ENCODE measurements at regions of chr1 and their contacts with region 1.

Region 1: GRCh38 chr1:84753516-84754385 is 63.5 kb upstream of the SSX2IP start:
- DNase-seq: peak; percentile 72
- H3K4me3 ChIP-seq: no peak overlapping the region
- H3K27ac ChIP-seq: no peak overlapping the region
- H3K4me1 ChIP-seq: no peaks in the 10 kb centered on the region
- CTCF ChIP-seq: peak; percentile 99

Region 2: DNA sequence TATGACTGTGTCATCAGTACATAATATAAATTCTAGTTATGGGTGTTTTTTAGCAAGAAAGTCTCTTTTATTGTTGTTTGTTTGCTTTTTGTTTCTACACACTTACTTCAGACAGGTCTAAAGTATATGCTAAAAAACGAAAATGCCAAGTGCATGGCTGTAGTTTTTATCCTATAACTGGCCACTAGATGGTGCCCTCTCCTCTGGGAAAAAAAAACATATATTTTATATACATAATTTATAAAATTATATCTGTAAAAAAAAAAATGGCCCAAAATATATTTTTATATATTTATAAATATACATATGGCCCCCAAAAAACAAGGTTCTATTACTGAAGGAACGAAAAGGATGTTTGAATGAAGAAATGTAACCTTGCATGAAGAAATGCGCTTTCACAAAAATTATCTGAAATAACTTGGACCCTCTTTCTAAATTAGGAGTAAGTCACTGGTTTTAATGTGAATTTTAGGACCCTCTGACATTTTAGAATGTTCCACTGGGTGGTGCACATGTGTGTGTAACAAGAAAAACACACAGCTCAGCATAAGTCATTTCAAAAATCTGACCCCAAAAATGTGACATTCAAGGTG is 848.3 kb before region 1 on chr1:
- CTCF ChIA-PET with region 1: no interaction called
- POLR2A ChIA-PET with region 1: no interaction called
- intact Hi-C with region 1: loop called (anchors 10 kb)
- DNase-seq: peak; percentile 38
- H3K4me3 ChIP-seq: no peak overlapping the region
- H3K27ac ChIP-seq: no peak overlapping the region
- H3K4me1 ChIP-seq: no peaks in the 10 kb centered on the region
- CTCF ChIP-seq: peak; percentile 82

Region 3: GRCh38 chr1:83931658-83932253 is 822.0 kb before region 1 on chr1:
- CTCF ChIA-PET with region 1: no interaction called
- POLR2A ChIA-PET with region 1: no interaction called
- intact Hi-C with region 1: loop called (anchors 5 kb)
- DNase-seq: peak; percentile 67
- H3K4me3 ChIP-seq: no peak overlapping the region
- H3K27ac ChIP-seq: no peak overlapping the region
- H3K4me1 ChIP-seq: no peaks in the 10 kb centered on the region
- CTCF ChIP-seq: peak; percentile 95

Region 4: DNA sequence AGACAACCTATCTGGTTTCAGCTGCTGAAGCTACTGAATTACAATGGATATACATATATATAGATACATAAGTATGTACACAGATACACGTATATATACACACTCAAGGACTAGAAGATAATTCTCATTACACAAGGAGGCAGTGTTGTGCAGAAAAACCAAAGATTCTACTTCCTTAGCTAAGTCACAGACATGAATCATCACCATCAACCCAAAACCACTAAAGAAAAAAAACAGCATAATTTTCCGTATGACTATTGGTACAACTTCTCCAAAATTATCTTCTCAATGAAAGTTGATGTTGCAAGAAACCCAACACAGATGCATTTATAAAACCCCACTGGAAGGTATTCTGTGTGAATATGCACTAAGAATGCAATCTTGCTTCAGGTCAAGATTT is 311.5 kb before region 1 on chr1:
- CTCF ChIA-PET with region 1: no interaction called
- POLR2A ChIA-PET with region 1: interaction called, 4 read pairs
- intact Hi-C with region 1: loop called (anchors 1 kb)
- DNase-seq: peak; percentile 60
- H3K4me3 ChIP-seq: no peak overlapping the region
- H3K27ac ChIP-seq: no peak overlapping the region
- H3K4me1 ChIP-seq: peaks cover 6% of the 10 kb centered on the region
- CTCF ChIP-seq: peak; percentile 80

Region 5: DNA sequence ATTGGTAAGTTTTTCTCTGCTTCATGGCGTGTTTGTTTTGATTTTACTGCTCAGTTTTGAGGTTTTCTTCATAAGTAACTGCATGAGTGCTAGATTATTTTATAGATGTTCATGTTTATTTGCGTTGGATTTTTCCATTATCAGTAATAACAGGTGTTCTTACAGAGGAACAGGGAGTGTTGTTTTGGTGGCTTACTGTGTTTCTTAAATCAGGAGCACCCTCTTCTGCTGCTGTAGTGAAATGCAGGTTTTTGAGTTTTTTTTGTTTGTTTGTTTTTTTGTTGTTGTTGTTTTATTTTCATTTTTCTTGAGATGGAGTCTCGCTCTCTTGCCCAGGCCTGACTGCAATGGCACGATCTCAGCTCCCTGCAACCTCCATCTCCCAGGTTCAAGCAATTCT is 212.1 kb before region 1 on chr1:
- CTCF ChIA-PET with region 1: no interaction called
- POLR2A ChIA-PET with region 1: no interaction called
- intact Hi-C with region 1: loop called (anchors 10 kb)
- DNase-seq: peak; percentile 8
- H3K4me3 ChIP-seq: no peak overlapping the region
- H3K27ac ChIP-seq: no peak overlapping the region
- H3K4me1 ChIP-seq: no peaks in the 10 kb centered on the region
- CTCF ChIP-seq: peak; percentile 68

Region 6: GRCh38 chr1:84620720-84621313 is 132.9 kb before region 1 on chr1:
- CTCF ChIA-PET with region 1: no interaction called
- POLR2A ChIA-PET with region 1: no interaction called
- intact Hi-C with region 1: loop called (anchors 2 kb)
- DNase-seq: peak; percentile 87
- H3K4me3 ChIP-seq: peak overlapping the region; percentile 73
- H3K27ac ChIP-seq: peak overlapping the region; percentile 38
- H3K4me1 ChIP-seq: peaks cover 9% of the 10 kb centered on the region
- CTCF ChIP-seq: peak; percentile 100

Region 7: GRCh38 chr1:84810343-84810742 is 56.6 kb after region 1 on chr1:
- CTCF ChIA-PET with region 1: no interaction called
- POLR2A ChIA-PET with region 1: no interaction called
- intact Hi-C with region 1: loop called (anchors 10 kb)
- DNase-seq: no peak
- H3K4me3 ChIP-seq: no peak overlapping the region
- H3K27ac ChIP-seq: no peak overlapping the region
- H3K4me1 ChIP-seq: no peaks in the 10 kb centered on the region
- CTCF ChIP-seq: no peak

Region 8: DNA sequence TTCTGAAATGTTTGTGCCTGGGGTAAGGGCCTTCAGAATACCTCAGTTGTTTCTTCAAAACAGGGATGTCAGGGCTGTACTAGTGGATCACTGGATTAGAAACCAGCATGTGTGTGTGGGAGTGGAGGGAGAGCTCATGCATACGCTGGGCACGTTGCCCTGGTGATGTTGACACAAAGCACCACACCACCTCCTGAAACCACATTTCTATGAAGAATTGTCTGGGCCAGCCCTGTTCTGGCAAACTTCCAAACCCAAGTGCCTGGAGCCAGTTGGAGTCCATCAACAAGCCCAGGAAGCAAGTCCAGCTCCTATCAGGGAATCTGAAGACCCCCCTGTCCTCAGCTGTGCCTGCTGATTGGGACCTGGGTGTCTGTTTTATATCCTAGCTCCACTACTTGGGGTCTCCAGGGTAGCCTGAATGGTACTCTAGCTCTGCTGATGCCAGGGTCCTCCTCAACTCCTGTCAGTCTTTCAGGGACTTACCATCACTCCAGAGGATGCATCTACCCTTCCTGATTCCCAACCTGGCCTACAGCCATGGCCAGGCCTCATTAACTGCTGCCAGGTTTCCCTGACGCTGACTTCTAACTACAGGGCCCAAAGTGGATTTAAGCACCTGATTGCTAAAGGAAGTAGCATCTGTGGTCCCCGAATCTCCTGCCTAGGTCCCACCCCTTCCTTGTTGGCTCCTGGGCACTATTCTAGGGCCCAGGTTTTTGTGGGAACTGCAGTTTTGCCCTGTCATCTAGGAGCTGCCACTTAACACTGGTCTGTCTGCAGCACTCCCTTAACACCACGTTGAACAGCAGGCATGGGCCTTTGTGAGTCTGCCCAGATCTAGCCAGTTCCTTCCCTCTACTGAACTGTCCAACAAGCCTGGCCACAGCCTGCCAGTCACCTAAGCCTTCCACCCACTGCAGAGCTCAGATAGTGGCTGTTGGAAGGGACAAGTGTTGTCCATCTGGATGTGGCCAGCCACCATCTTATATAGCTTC is 93.8 kb after region 1 on chr1:
- CTCF ChIA-PET with region 1: no interaction called
- POLR2A ChIA-PET with region 1: no interaction called
- intact Hi-C with region 1: no loop called
- DNase-seq: no peak
- H3K4me3 ChIP-seq: no peak overlapping the region
- H3K27ac ChIP-seq: no peak overlapping the region
- H3K4me1 ChIP-seq: no peaks in the 10 kb centered on the region
- CTCF ChIP-seq: no peak